ENCODE measurements at regions of chr1 and their contacts with region 1.

Region 1: DNA sequence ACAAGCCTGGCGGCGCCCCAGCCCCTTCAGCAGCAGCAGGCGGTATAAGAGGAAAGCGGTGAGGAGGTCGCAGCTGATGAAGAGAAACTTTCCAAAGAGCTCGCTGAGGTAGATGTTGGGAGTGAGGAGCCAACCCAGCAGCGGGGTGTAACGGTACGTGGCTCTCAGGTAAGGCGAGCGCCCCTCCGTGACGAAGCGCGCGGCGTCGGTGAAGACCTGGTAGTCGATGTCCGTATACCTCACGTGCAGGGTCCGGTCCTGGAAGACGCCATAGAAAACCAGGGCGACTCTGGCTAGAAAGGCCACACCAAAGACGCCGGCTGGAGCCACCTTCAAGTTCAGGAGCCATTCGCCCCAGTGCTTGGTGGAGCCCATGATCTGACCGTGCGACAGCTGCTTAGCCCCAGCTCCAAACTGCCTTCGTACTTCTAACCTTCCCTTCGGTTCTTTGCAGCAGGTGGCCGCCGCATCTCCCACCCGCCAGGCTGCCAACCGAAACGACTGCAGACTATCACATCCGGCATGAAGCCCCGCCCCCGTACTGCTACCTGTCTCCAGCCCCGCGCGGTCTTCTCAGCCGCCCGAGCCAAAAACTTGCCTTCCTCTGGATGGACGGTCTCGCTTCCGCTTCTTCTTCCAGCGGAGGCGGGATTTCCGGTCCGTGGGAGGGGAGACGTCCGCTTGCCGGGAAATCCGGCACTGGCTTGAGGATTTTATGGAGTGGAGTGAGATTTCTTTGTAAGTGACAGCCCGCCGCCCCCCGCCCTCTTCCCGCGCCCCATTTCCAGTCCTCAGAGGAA is at the start of gene PIGM:
- DNase-seq: peak; percentile 55
- H3K4me3 ChIP-seq: peak within 1 kb of the TSS; percentile 54 to 97 (median 83)
- H3K27ac ChIP-seq: peak within 1 kb of the TSS; percentile 55
- H3K4me1 ChIP-seq: peaks cover 17% of the 10 kb centered on the region
- H3K27me3 ChIP-seq: no peaks in the 10 kb centered on the region
- CTCF ChIP-seq: peak in 1 of 3 experiments; percentile 18
- polyA plus RNA-seq, gene PIGM: 1.9 to 3.1 TPM (median 3.1 TPM) in 3 replicates

Region 2: DNA sequence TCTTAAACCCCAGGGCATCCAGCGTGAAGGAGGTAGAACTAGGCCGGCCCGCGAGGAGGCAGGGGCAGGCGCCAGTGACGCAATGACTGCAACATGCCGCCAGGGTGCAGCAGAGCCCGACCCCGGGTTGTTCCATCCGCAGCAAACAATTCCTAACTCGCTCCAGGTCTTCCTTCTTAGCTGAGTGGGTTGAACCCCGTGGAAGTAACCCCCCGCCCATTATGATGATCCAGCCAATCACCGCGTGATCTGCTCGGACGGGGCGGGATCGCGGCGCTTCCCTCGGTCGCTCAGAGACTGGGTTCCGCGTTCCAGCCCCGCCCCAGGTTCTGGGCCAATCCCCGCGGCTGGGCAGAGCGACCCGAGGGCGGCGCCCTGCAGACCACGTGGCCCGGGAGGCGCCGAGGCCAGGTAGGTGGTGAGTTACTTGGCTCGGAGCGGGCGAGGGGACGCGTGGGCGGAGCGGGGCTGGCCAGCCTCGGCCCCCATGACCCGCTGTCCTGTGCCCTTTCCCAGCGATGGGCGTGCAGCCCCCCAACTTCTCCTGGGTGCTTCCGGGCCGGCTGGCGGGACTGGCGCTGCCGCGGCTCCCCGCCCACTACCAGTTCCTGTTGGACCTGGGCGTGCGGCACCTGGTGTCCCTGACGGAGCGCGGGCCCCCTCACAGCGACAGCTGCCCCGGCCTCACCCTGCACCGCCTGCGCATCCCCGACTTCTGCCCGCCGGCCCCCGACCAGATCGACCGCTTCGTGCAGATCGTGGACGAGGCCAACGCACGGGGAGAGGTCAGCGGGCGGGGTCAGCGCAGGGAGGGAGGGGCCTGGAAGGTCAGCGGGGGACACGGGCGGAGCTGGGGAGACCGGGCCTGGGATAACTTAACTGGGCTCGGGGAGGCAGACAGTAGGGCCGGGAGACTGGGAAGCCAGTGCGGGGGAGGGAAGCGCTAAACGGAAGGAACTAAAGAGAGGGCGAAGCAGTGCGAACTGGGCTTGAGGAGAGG is 250.7 kb before region 1 on chr1 and contains the start of gene DUSP23:
- dilution Hi-C with region 1: loop called (anchors 25 kb)
- DNase-seq: peak; percentile 84
- H3K4me3 ChIP-seq: peak within 1 kb of the TSS; percentile 64 to 90 (median 72)
- H3K27ac ChIP-seq: peak within 1 kb of the TSS; percentile 33
- H3K4me1 ChIP-seq: no peaks in the 10 kb centered on the region
- H3K27me3 ChIP-seq: no peaks in the 10 kb centered on the region
- CTCF ChIP-seq: peak; percentile 96 to 98 (median 98)
- polyA plus RNA-seq, gene DUSP23: 23.8 to 44.6 TPM (median 35.0 TPM) in 3 replicates

Region 3: GRCh38 chr1:159817276-159818041 is 214.1 kb before region 1 on chr1:
- dilution Hi-C with region 1: no loop called
- DNase-seq: no peak
- H3K4me3 ChIP-seq: no peak overlapping the region
- H3K27ac ChIP-seq: no peak overlapping the region
- H3K4me1 ChIP-seq: no peaks in the 10 kb centered on the region
- H3K27me3 ChIP-seq: peaks cover 8% of the 10 kb centered on the region
- CTCF ChIP-seq: no peak

Region 4: DNA sequence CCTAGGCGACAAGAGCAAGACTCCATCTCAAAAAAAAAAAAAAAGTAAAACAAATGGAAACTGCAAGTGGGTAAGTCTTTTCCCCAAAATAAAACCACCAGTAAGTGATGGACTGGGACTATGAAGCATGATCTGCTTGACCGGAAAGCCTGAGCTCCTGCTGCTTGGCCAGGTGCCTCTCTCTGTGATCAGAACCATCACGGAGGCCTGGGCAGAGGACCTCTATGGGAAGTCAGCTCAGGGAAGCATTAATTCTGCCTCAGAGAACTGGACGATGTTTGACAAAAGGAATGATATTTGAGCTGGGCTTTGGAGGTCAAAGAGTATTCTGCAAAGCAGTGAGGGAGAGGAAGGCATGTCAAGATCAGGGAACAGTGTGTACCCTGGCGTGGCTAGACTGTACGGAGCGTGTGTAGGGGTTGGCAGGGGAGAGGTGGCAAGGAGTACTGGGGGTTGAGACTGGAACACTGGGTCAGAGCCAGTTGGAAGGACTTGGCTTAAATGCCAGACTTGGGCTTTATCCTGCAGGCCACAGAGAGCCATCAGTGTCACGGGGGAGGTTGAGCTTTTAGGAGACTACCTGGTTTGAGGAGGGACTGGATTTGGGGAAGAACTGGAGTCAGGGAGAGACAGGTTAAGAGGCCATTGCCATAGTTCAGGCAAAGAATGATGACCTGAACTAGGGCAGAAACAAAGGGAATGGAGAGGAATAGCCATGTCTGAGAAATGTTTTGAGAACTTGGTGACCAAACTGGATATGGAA is 100.4 kb after region 1 on chr1:
- dilution Hi-C with region 1: no loop called
- DNase-seq: no peak
- H3K4me3 ChIP-seq: no peak overlapping the region
- H3K27ac ChIP-seq: no peak overlapping the region
- H3K4me1 ChIP-seq: no peaks in the 10 kb centered on the region
- H3K27me3 ChIP-seq: peaks cover 17% of the 10 kb centered on the region
- CTCF ChIP-seq: no peak

Region 5: DNA sequence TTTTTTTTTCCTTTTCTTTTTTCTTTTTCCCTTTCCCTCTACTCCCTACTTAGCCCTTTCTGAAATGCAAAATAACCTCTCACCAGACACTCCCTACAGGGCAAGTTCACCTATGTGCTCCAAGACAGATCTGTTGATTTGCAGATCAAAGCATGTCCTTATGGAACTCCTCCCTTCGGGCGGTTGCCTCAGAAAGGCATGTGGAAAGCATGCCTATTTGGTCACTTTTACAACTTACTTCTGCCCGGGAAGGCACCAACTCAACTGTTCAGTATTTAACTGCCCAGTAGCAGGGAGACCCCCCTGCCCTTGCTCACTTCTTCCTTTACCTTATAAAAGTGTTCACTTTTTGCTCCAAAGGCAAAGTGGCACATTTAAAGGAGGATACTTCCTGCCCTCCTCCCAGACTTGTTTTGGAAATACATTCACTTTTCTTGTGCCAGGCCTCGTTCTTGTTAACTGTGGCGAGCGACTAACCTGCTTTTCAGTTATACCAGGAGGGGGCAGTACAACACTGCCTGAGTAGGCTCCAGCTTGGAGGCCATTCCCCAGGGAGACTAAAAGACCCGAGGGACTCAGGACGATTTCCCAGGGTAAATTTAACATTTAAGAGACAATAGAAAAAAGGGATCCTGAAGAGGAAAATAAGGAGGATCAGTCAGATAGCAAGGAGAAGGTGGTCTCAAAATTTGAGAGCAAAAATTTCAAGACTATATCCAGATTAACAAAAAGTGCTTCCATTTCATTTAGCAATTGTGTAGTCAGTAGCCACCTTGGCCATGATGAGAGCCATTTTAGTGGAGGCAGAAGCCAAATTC is 695.1 kb after region 1 on chr1:
- dilution Hi-C with region 1: no loop called
- DNase-seq: peak; percentile 56
- H3K4me3 ChIP-seq: no peak overlapping the region
- H3K27ac ChIP-seq: peak overlapping the region; percentile 66
- H3K4me1 ChIP-seq: peaks cover 35% of the 10 kb centered on the region
- H3K27me3 ChIP-seq: no peaks in the 10 kb centered on the region
- CTCF ChIP-seq: peak; percentile 82 to 86 (median 84)